Caco-2 (cell line): ENCODE measurements at regions of chr3 and their contacts with region 1.

Region 1: DNA sequence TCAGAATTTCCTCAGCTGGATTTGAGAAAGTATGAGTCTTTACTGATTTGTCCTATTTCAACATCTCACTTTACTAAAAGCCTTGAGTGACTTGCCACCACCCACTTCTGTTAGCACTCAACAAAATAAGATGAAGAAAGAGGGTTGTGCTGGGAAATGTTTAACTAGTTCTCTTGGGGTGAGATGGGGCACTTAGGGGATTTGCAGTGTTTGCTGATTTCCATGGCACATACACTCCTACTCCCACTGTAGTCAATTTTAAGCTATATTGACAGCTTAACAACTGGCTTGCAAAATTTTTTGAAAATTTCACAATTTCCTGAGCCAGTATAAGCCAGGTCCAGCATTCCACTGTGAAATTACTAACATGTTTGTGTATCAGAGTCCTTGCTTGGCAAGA is 463.1 kb upstream of the ARHGEF26 start:
- DNase-seq: peak; percentile 46 to 70
- H3K4me3 ChIP-seq: no peak overlapping the region
- H3K4me3 Mint-ChIP-seq: no peak overlapping the region
- H3K27ac Mint-ChIP-seq: no peak overlapping the region
- H3K4me1 ChIP-seq: no peaks in the 10 kb centered on the region; the same call in 1 of the 2 replicates
- H3K4me1 Mint-ChIP-seq: no peaks in the 10 kb centered on the region
- H3K27me3 ChIP-seq: no peaks in the 10 kb centered on the region
- H3K27me3 Mint-ChIP-seq: no peaks in the 10 kb centered on the region
- CTCF ChIP-seq: no peak

Region 2: GRCh38 chr3:153640689-153641301 is 17.3 kb before region 1 on chr3:
- CTCF ChIA-PET with region 1: no interaction called
- POLR2A ChIA-PET with region 1: no interaction called
- intact Hi-C with region 1: loop called (anchors 1 kb)
- DNase-seq: peak; percentile 58 to 85
- H3K4me3 ChIP-seq: no peak overlapping the region
- H3K4me3 Mint-ChIP-seq: no peak overlapping the region
- H3K27ac Mint-ChIP-seq: peak overlapping the region; percentile 79
- H3K4me1 ChIP-seq: peaks cover 17% of the 10 kb centered on the region
- H3K4me1 Mint-ChIP-seq: peaks cover 15% of the 10 kb centered on the region
- H3K27me3 ChIP-seq: no peaks in the 10 kb centered on the region
- H3K27me3 Mint-ChIP-seq: no peaks in the 10 kb centered on the region
- CTCF ChIP-seq: no peak

Region 3: DNA sequence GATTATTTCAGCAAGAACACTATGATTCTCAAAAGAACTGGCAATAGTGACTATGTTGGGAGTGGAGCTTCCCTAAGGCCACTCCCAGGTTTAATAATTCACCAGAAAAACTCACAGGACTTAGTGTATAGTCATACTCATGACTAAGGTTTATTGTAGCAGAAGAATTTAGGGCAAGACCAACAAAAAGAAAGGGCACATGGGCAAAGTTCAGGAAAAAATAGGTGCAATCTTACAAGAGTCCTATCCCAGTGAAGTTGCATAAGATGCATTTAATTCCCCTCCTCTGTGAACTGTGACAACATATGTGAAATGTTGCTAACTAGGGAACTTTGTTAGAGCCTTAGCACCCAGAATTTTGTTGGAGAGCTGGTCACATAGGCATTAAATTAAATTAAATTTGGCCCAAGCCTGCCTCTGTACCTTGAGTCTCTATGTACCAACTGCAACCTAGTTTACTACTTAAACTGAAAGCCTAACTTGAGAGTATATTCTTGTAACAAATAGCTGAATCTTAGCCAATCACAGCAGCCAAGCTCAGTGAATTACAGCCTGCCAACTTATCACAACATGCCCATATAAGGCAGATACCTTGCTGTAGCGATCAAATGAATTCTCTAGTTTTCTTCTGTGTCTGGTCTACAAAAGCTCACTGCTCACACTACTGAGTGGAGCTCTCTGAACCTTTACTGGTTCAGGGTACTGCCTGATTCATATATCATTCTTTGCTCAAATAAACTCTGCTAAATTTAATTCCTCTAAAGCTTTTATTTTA is 76.8 kb after region 1 on chr3:
- CTCF ChIA-PET with region 1: no interaction called
- POLR2A ChIA-PET with region 1: no interaction called
- intact Hi-C with region 1: loop called (anchors 5 kb)
- DNase-seq: peak; percentile 45 to 64
- H3K4me3 ChIP-seq: no peak overlapping the region
- H3K4me3 Mint-ChIP-seq: no peak overlapping the region
- H3K27ac Mint-ChIP-seq: peak overlapping the region; percentile 67
- H3K4me1 ChIP-seq: peaks cover 12% of the 10 kb centered on the region
- H3K4me1 Mint-ChIP-seq: no peaks in the 10 kb centered on the region
- H3K27me3 ChIP-seq: no peaks in the 10 kb centered on the region
- H3K27me3 Mint-ChIP-seq: no peaks in the 10 kb centered on the region
- CTCF ChIP-seq: no peak